ENCODE measurements at regions of chr20 and their contacts with region 1.

Region 1: GRCh38 chr20:17995967-17996819 is 27.4 kb downstream of the MGME1 start:
- DNase-seq: peak; percentile 88
- ATAC-seq: peak; percentile 29
- H3K4me3 ChIP-seq: no peak overlapping the region
- H3K27ac ChIP-seq: no peak overlapping the region
- H3K4me1 ChIP-seq: peaks cover 29% of the 10 kb centered on the region
- H3K27me3 ChIP-seq: no peaks in the 10 kb centered on the region
- CTCF ChIP-seq: peak; percentile 98

Region 2: DNA sequence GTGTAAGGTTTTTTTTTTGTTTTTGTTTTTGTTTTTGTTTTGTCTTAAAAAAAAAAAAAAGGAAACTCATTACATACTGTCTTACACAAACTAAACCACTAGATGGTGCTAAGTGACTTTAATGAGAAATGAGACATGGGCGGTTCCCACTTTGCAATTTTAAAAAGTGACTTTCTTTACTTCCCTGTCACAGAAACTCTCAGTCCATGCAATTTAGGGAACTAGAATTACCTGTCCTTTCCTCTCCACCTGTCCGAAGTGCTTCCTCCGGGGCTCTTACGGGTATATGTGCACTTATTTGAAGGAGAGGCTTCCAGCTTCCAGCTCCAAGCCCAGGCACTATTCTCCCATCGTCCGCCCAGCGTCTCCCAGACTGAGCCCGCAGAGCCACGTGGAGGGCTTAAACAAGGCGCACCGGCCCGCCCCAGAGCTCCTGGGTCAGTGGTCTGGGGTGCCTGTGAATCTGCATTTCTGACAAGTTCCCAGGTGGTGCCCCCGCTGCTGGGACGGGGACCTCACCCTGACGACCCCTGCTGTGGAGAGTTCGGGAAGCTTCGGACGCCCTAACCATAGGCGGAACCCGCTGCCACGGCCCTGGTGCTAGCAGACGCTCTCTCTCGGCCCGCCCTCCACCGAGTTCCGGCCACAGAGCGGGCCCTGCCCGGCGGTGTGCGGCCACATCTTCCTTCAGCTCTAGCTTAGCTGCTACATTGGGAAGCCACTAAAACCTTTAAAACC is 491.1 kb before region 1 on chr20:
- CTCF ChIA-PET with region 1: interaction called, 15 read pairs
- POLR2A ChIA-PET with region 1: no interaction called
- intact Hi-C with region 1: loop called (anchors 2 kb)
- DNase-seq: peak; percentile 84
- ATAC-seq: peak; percentile 86
- H3K4me3 ChIP-seq: peak overlapping the region; percentile 80
- H3K27ac ChIP-seq: peak overlapping the region; percentile 25; the same call in 1 of the 2 replicates
- H3K4me1 ChIP-seq: peaks cover 9% of the 10 kb centered on the region; the same call in 1 of the 2 replicates
- H3K27me3 ChIP-seq: no peaks in the 10 kb centered on the region
- CTCF ChIP-seq: peak; percentile 91

Region 3: DNA sequence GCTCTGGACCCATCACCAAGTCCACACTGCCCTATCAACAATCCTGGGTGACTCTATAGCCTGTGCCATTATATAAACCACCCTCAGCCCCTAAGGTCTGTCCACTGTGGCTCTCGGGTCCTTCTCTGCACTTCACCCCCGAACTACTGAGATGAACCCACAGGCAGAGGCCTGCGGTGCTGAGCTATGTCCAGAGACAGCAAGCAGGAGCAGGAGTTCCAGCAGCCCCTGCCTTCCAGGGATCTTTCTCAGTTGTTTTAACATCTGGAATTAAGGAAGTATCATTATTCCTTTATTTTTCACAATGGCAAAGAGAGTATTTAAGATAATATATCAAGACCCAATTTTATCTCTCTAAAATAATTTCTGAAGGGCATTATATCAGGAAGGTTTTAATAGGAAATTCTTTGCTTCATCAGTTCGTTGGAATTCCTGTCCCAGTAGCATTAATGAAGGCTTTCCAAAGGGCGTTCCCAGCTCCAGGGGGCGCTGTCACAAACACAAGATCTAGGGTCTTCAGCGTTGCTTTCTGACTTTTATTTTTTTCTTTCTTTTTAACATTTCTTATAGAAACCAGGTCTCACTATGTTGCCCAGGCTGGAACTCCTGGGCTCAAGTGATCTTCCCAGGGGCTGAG is 341.4 kb before region 1 on chr20:
- CTCF ChIA-PET with region 1: no interaction called
- POLR2A ChIA-PET with region 1: no interaction called
- intact Hi-C with region 1: loop called (anchors 10 kb)
- DNase-seq: peak; percentile 51
- ATAC-seq: no peak
- H3K4me3 ChIP-seq: no peak overlapping the region
- H3K27ac ChIP-seq: 0 out of 2 replicates have a peak overlapping the region, but pooled peaks have one; percentile 4
- H3K4me1 ChIP-seq: peaks cover 26% of the 10 kb centered on the region
- H3K27me3 ChIP-seq: no peaks in the 10 kb centered on the region
- CTCF ChIP-seq: peak; percentile 95

Region 4: GRCh38 chr20:17747431-17747867 is 248.7 kb before region 1 on chr20:
- CTCF ChIA-PET with region 1: no interaction called
- POLR2A ChIA-PET with region 1: no interaction called
- intact Hi-C with region 1: loop called (anchors 5 kb)
- DNase-seq: peak; percentile 89
- ATAC-seq: peak; percentile 100
- H3K4me3 ChIP-seq: peak overlapping the region; percentile 52
- H3K27ac ChIP-seq: no peak overlapping the region
- H3K4me1 ChIP-seq: peaks cover 6% of the 10 kb centered on the region
- H3K27me3 ChIP-seq: peaks cover 1% of the 10 kb centered on the region; the same call in 1 of the 2 replicates
- CTCF ChIP-seq: no peak

Region 5: GRCh38 chr20:17958373-17959256 is 37.6 kb before region 1 on chr20:
- CTCF ChIA-PET with region 1: interaction called, 6 read pairs
- POLR2A ChIA-PET with region 1: interaction called, 8 read pairs
- intact Hi-C with region 1: loop called (anchors 1 kb)
- DNase-seq: peak; percentile 43
- ATAC-seq: peak; percentile 35
- H3K4me3 ChIP-seq: no peak overlapping the region
- H3K27ac ChIP-seq: no peak overlapping the region
- H3K4me1 ChIP-seq: peaks cover 27% of the 10 kb centered on the region
- H3K27me3 ChIP-seq: no peaks in the 10 kb centered on the region
- CTCF ChIP-seq: peak; percentile 40; the same call in 1 of the 2 replicates

Region 6: GRCh38 chr20:18252597-18253451 is 256.6 kb after region 1 on chr20:
- CTCF ChIA-PET with region 1: no interaction called
- POLR2A ChIA-PET with region 1: no interaction called
- intact Hi-C with region 1: loop called (anchors 2 kb)
- DNase-seq: peak; percentile 99
- ATAC-seq: peak; percentile 94
- H3K4me3 ChIP-seq: peak overlapping the region; percentile 28; the same call in 1 of the 2 replicates
- H3K27ac ChIP-seq: peak overlapping the region; percentile 96
- H3K4me1 ChIP-seq: peaks cover 35% of the 10 kb centered on the region
- H3K27me3 ChIP-seq: no peaks in the 10 kb centered on the region
- CTCF ChIP-seq: no peak

Measured in PC-3 (cell line).